Left cardiac atrium (tissue), 4 donors: ENCODE measurements at regions of chr7 and their contacts with region 1.

Region 1: DNA sequence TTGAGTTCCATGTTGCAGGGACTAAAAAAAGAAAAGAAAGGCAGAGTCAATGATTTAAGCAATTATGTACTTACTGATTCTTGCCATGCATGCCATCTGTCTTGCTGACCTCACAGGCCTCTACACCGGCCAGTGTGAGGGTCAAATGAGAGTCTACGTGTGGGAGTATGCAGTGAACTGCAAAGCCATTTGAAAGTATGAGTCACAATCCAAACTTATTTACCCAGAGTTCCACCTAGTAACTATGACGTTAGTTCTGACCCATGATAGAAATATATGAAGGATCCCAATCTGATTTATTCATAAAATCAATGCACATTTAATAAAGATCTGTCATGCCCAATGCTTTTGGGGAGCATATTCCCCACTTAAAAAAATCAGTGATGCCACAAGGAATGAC is 26.5 kb downstream of the PDE1C start:
- DNase-seq: no peak
- ATAC-seq: peak in 1 of 2 donors; percentile 64

Region 2: DNA sequence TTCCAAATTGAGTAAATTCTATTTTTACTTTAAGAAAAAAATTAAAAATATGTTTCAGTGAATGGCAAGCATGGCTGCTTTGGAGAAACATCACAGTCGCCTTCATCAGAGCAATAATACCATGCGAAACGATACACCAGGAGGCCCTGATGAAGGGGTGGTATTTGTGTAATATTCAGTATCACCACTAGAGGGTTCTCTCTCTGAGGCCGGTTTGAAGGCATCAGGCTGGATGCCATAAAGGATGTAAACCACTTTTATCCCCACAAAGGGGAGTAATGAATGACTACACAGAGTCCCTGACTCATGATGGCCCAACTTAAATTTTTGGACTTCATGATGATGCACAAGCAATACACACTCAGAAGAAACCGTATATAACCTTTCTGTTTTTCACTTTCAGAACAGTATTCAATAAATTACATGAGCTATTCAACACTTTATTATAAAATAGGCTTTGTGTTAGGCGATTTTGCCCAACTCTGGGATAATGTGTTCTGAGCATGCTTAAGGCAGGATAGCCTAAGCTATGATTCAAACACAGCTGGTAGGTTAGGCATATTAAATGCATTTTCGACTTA is 261.2 kb before region 1 on chr7:
- intact Hi-C with region 1: loop called in 1 of 2 experiments (anchors 10 kb)
- DNase-seq: no peak
- ATAC-seq: peak; percentile 63 to 76

Region 3: GRCh38 chr7:31883761-31884164 is 160.0 kb before region 1 on chr7:
- intact Hi-C with region 1: loop called in 1 of 2 experiments (anchors 10 kb)
- DNase-seq: no peak
- ATAC-seq: peak; percentile 51 to 65

Region 4: GRCh38 chr7:32427769-32428291 is 384.1 kb after region 1 on chr7:
- intact Hi-C with region 1: no loop called
- DNase-seq: peak; percentile 83
- ATAC-seq: peak; percentile 89 to 92

Region 5: DNA sequence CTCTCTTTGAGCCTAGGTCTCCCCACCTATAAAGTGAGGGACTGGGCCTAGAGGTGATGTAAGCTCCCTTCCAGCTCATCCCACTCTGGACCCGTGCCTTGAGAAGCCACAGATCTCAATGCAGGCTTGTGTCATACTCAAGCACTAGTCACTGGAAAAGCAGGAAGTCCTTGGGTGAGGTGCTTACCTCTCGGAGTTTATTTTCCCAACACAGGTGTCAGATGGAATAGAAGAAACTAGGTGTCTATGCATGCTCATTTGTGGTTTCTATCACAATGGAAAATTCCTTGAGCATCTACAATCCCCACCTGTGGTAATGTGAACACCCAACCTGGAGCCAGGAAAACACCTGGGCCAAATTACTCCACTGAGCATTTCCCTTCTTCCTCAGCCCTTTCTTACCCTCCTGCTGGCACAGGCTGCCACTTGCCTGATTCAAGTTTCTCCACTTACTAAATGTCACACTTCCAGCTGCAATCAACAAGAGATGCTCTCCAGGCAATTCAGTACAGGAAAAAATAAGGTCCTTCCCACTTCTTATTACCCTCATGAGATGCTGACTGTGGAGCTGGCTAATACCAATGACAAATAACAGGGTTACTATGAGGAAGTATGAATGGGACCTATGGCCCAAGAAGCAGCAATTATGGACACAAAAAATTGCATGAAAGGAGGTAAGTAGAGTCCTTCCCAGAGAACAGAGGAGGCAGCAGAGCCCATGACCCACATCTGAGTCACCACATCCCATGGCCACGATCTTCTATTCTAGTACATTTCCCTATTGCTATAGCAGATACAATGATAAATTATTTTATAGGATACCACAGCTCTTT is 433.3 kb after region 1 on chr7:
- intact Hi-C with region 1: no loop called
- DNase-seq: no peak
- ATAC-seq: no peak

Region 6: DNA sequence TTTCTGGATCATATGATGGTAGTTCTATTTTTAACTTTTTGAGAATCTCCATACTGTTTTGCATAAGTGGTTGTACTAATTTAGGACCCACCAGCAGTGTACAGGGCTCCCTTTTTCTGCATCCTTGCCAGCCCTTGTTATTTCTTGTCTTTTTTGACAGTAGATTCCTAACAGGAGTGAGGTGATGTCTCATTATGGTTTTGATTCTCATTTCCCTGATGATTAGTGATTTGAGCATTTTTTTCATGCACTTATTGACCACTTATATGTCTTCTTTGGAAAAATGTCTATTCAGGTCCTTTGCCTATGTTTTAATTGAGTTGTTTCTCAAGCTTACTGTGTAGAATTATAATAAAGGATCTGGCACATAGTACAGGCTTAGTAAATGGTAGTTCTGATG is 1622.8 kb after region 1 on chr7:
- intact Hi-C with region 1: no loop called
- DNase-seq: no peak
- ATAC-seq: no peak